ENCODE measurements at regions of chr13 and their contacts with region 1.

Region 1: DNA sequence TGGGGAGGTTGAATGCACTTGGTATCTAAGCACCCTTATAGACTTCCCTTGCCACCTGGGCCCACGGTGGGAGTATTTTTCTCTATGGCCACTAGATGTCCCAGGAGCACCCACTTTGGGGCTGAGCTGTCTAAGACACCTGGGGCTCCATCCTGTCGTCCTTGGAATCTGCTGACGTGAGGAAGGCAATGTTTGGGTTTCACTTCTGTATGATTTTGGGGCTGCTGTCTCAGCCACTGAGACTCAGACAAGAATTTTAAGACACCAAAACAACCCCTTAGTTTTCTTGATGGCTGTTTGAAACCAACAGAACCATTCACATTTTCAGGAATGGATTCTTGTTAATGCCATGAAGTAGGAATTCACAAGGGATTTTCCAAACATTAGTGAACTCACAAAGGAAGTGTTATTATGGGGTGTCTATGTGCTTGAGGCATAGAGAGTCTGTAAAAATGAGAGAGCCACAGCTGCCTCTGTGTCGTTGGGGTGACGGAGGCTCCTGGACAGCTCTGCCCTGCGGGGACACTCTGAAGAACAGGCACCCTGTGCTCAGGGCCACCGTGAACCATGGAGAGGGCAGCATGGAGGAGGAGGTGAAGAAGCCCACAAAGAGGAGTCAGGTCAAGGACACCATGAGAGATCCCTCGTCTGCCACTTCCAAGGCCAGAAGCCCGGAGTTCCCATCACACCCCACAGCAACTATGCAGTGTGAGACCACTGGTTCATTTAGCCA is 106.8 kb upstream of the SPATA13 start:
- DNase-seq: peak; percentile 49 to 76
- H3K4me3 ChIP-seq: no peak overlapping the region
- H3K27ac ChIP-seq: no peak overlapping the region
- H3K4me1 ChIP-seq: peaks cover 0 to 13% (median 6%) of the 10 kb centered on the region in 4 experiments; a peak in 5 of 7 replicates
- H3K27me3 ChIP-seq: no peaks in the 10 kb centered on the region
- CTCF ChIP-seq: peak; percentile 59 to 80 (median 77)
- EP300 ChIP-seq: no peak
- POLR2A ChIP-seq: no peak
- RAD21 ChIP-seq: peak; percentile 91 to 93

Region 2: DNA sequence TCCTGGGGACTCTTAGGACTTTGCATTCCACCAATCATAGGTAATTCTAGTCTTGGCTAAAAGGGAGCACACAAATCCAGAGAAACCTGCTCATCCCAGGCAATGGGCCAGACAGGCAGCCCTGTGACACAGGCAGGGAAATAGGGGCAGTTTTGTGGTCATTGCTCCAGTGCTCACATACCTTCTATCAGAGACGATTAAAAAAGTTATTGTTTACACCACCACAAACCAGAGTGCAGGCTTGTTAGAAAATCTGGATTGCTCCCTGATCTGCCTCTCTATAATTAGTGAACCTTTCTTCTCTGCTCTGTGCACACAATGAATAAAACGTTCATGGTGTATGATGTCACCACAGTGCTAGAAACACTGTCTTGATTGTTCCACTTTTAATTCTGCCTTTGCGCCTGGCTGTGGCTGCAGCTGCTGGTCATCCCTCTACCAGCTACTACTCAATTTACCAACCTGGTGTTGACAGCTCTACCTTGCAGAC is 14.8 kb before region 1 on chr13:
- CTCF ChIA-PET with region 1: interaction called, 39 read pairs
- POLR2A ChIA-PET with region 1: interaction called, 3 read pairs
- DNase-seq: no peak
- H3K4me3 ChIP-seq: no peak overlapping the region
- H3K27ac ChIP-seq: no peak overlapping the region
- H3K4me1 ChIP-seq: peaks cover 0 to 9% (median 4%) of the 10 kb centered on the region in 4 experiments; a peak in 4 of 7 replicates
- H3K27me3 ChIP-seq: peaks cover 8 to 48% (median 39%) of the 10 kb centered on the region in 4 experiments
- CTCF ChIP-seq: no peak
- EP300 ChIP-seq: no peak
- POLR2A ChIP-seq: no peak
- RAD21 ChIP-seq: no peak

Region 3: DNA sequence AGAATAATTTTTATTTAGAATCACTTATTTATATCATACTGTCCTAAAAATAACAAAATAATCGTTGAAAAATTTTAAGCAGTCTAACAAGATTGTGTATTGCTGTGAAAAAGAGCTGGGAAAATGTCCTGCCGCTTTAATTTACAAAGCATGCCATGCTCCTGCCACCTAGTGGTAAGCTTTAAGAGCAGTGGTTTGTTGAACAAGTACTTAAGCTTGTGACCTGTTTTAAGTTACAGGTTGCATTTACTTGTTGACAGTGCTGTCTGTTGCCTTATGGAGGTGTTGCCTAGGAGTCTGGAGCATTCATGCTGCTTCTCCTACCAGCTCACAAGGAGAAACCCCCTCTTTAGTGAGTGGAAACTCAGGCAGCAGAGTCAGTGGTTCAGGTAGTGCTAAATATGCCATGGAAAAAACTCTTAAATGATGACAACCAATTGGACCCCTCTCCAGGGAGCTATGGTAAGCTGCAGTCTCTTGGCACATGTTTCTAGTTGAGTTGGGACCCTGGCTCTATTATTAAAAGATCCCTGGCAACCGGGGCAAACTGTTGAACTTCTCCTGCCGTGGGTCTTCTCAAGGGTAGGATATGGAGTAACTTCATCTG is 175.3 kb after region 1 on chr13:
- CTCF ChIA-PET with region 1: interaction called, 11 read pairs
- POLR2A ChIA-PET with region 1: interaction called, 3 read pairs
- DNase-seq: no peak
- H3K4me3 ChIP-seq: no peak overlapping the region
- H3K27ac ChIP-seq: no peak overlapping the region
- H3K4me1 ChIP-seq: peaks cover 0 to 10% (median 0%) of the 10 kb centered on the region in 4 experiments; a peak in 3 of 7 replicates
- H3K27me3 ChIP-seq: no peaks in the 10 kb centered on the region
- CTCF ChIP-seq: peak in 2 of 3 experiments; percentile 74 to 92; a peak in 3 of 4 replicates
- EP300 ChIP-seq: no peak
- POLR2A ChIP-seq: no peak
- RAD21 ChIP-seq: peak; percentile 68 to 77